CD4-positive, alpha-beta memory T cell (primary cell): ENCODE measurements at regions of chr3 and their contacts with region 1.

Region 1: GRCh38 chr3:124761250-124761796 is 31.1 kb downstream of the UMPS start:
- DNase-seq: peak; percentile 64 to 74 (median 69)
- H3K4me3 ChIP-seq: no peak overlapping the region
- H3K4me3 Mint-ChIP-seq: peak overlapping the region in 7 of 8 donors; percentile 44 to 84 (median 73)
- H3K27ac ChIP-seq: no peak overlapping the region
- H3K27ac Mint-ChIP-seq: peak overlapping the region in 3 of 7 donors; percentile 32 to 66 (median 62)
- H3K4me1 ChIP-seq: peaks cover 5% of the 10 kb centered on the region
- H3K4me1 Mint-ChIP-seq: peaks cover 3 to 9% (median 4%) of the 10 kb centered on the region in 4 donors
- H3K27me3 ChIP-seq: no peaks in the 10 kb centered on the region
- H3K27me3 Mint-ChIP-seq: no peaks in the 10 kb centered on the region

Region 2: DNA sequence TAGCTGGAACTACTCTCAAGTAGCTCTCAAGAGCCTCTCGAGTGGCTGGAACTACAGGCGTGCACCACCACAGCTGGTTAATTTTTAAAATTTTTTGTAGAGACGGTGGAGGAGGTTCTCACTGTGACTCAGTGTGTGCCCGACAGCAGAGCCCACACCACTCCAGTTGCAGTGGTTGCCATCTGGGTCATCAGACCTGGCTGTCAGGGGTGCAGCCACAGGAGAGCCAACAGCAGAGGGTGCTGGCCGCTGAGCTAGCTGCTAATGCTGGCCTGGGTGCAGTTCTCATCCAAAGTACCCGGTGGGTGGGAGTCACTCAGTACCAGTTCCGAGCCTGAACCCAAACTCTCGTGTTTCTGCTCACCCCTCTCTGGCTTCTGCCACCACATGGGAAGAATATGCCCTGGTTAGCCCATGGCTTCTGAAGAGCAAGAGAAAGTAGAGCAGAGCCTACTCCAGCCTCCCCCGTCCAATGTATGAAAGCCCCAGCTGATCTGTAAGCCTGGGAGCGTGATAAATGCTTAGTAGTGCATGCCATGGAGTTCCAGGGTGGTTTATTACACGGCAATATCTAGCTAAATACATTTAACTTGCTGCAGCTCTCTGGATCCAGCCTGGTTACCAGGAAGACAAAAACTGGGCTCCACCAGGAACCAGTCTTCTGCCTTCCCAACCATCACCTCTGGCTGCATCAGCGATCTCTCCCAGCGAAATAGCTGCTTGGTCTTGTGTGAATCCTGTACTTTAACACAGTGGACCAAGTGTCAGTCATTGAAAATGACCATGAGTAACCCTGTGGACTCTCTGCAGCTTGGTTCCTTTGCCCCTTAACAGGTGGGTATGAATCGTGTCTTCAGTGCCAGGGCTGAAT is 14.0 kb before region 1 on chr3:
- CTCF ChIA-PET with region 1: interaction called, 17 read pairs
- POLR2A ChIA-PET with region 1: no interaction called
- intact Hi-C with region 1: no loop called
- DNase-seq: no peak
- H3K4me3 ChIP-seq: no peak overlapping the region
- H3K4me3 Mint-ChIP-seq: no peak overlapping the region
- H3K27ac ChIP-seq: no peak overlapping the region
- H3K27ac Mint-ChIP-seq: no peak overlapping the region
- H3K4me1 ChIP-seq: no peaks in the 10 kb centered on the region
- H3K4me1 Mint-ChIP-seq: no peaks in the 10 kb centered on the region
- H3K27me3 ChIP-seq: no peaks in the 10 kb centered on the region
- H3K27me3 Mint-ChIP-seq: no peaks in the 10 kb centered on the region

Region 3: GRCh38 chr3:124786441-124787241 is 25.3 kb after region 1 on chr3:
- CTCF ChIA-PET with region 1: interaction called, 14 read pairs
- POLR2A ChIA-PET with region 1: no interaction called
- intact Hi-C with region 1: no loop called
- DNase-seq: no peak
- H3K4me3 ChIP-seq: no peak overlapping the region
- H3K4me3 Mint-ChIP-seq: no peak overlapping the region
- H3K27ac ChIP-seq: no peak overlapping the region
- H3K27ac Mint-ChIP-seq: peak overlapping the region in 2 of 7 donors; percentile 22 to 62
- H3K4me1 ChIP-seq: no peaks in the 10 kb centered on the region
- H3K4me1 Mint-ChIP-seq: peaks cover 0 to 3% (median 0%) of the 10 kb centered on the region in 4 donors
- H3K27me3 ChIP-seq: no peaks in the 10 kb centered on the region
- H3K27me3 Mint-ChIP-seq: peaks cover 0 to 1% of the 10 kb centered on the region in 2 donors

Region 4: DNA sequence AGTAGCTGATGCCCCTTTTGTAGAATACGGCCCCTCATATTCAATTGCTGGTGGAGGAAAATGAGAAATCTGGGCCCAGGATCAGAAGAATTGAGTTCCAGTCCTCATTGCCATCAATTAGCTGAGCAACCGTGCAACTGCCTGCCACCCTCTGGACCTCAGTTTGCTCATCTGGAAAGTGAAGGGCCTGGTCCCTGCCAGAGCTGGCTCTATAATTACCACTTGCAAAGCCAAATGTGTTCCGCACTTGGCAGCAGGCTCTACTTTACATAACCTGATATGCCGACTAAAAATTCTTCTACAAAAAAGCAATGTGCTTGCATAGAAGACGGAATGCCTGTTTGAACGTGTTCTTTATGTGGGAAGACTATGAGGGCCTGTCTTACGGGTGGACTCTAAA is 134.4 kb after region 1 on chr3:
- CTCF ChIA-PET with region 1: interaction called, 291 read pairs
- POLR2A ChIA-PET with region 1: interaction called, 20 read pairs
- intact Hi-C with region 1: no loop called
- DNase-seq: no peak
- H3K4me3 ChIP-seq: no peak overlapping the region
- H3K4me3 Mint-ChIP-seq: no peak overlapping the region
- H3K27ac ChIP-seq: no peak overlapping the region
- H3K27ac Mint-ChIP-seq: no peak overlapping the region
- H3K4me1 ChIP-seq: no peaks in the 10 kb centered on the region
- H3K4me1 Mint-ChIP-seq: peaks cover 0 to 5% (median 1%) of the 10 kb centered on the region in 4 donors
- H3K27me3 ChIP-seq: no peaks in the 10 kb centered on the region
- H3K27me3 Mint-ChIP-seq: peaks cover 0 to 2% of the 10 kb centered on the region in 2 donors

Region 5: GRCh38 chr3:125055913-125056745 is 294.8 kb after region 1 on chr3 and contains the start of gene HEG1:
- CTCF ChIA-PET with region 1: no interaction called
- POLR2A ChIA-PET with region 1: no interaction called
- intact Hi-C with region 1: loop called (anchors 1 kb)
- DNase-seq: peak; percentile 71 to 80 (median 72)
- H3K4me3 ChIP-seq: peak within 1 kb of the TSS; percentile 60 to 75
- H3K4me3 Mint-ChIP-seq: peak within 1 kb of the TSS; percentile 92 to 99 (median 96)
- H3K27ac ChIP-seq: peak within 1 kb of the TSS; percentile 73
- H3K27ac Mint-ChIP-seq: peak within 1 kb of the TSS; percentile 95 to 99 (median 98)
- H3K4me1 ChIP-seq: peaks cover 41% of the 10 kb centered on the region
- H3K4me1 Mint-ChIP-seq: peaks cover 32 to 42% (median 38%) of the 10 kb centered on the region in 4 donors
- H3K27me3 ChIP-seq: no peaks in the 10 kb centered on the region
- H3K27me3 Mint-ChIP-seq: peaks cover 5 to 6% of the 10 kb centered on the region in 2 donors
- total RNA-seq, gene HEG1: 20.2 to 21.7 TPM

Region 6: DNA sequence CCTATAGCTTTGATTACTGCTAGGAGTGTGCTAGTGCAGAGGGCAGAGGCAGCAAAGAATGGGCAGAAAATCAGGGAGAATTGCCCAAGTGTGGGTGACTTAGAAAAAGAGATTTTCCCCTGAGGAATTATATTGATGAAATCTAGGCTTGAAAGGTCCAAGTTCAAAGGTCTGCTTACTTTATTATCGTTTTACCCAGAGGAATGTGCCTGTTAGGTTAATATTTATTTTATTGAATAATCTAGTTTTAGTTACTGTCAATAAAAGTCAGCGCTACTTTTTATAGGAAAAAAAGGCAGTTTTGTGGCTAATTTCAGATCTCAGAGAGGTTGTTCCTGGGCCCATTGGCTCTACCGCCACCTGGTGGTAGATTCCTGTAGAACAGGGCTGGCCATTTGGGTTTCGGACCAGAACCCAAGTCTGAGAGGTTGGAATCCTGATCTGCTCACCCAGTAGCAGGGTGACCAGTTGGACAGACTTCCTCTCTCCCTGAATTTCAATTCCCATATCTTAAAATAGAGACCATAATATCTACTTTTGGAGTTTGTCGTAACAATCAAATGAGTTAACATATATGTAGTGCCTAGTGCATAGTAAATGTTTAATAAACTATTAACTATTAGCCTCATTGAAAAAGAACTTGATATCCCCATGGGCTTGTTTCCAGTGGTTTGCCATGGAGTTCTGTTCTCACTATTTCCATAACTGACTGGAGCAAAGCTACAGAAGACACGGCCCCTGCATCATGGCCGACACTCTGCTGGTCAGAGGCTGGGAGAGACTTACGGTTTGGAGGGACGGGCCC is 676.5 kb after region 1 on chr3:
- CTCF ChIA-PET with region 1: interaction called, 19 read pairs
- POLR2A ChIA-PET with region 1: no interaction called
- intact Hi-C with region 1: loop called (anchors 1 kb)
- DNase-seq: peak; percentile 45 to 60 (median 51)
- H3K4me3 ChIP-seq: no peak overlapping the region
- H3K4me3 Mint-ChIP-seq: no peak overlapping the region
- H3K27ac ChIP-seq: no peak overlapping the region
- H3K27ac Mint-ChIP-seq: no peak overlapping the region
- H3K4me1 ChIP-seq: no peaks in the 10 kb centered on the region
- H3K4me1 Mint-ChIP-seq: peaks cover 0 to 3% (median 3%) of the 10 kb centered on the region in 4 donors
- H3K27me3 ChIP-seq: no peaks in the 10 kb centered on the region
- H3K27me3 Mint-ChIP-seq: no peaks in the 10 kb centered on the region